ENCODE measurements at regions of chr15 and their contacts with region 1.

Region 1: GRCh38 chr15:62254137-62254934 is 89.3 kb upstream of the C2CD4B start:
- DNase-seq: peak; percentile 69
- H3K4me3 Mint-ChIP-seq: no peak overlapping the region
- H3K27ac Mint-ChIP-seq: no peak overlapping the region
- H3K4me1 Mint-ChIP-seq: no peaks in the 10 kb centered on the region
- H3K27me3 Mint-ChIP-seq: peaks cover 11% of the 10 kb centered on the region
- CTCF ChIP-seq: peak; percentile 70

Region 2: DNA sequence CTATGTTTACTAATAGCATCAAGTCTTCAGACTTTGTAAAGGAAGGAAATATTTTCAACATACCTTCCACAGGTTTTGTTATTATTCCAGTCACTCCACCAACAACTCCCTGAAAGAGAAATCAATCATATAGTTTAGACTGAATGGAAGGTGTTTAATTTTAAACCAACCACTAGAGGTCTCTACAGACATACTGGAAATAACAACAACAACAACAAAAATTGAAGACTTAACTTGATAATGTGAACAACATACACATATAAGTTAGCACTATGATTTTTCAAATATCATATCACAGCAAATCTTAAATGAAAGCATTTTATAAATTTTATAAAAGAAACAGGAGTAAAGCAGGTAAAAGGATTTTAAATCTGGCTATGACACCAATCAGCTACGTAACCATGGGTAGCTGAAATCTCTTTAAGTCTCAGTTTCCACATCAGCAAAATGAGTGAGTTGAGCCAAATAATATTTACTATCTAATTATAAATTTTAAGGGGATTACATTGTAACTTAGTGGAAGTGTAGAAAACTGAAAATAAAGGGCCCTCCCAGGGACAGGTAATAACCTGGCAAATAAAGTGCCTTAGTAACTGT is 382.3 kb before region 1 on chr15:
- CTCF ChIA-PET with region 1: no interaction called
- POLR2A ChIA-PET with region 1: no interaction called
- intact Hi-C with region 1: loop called (anchors 5 kb)
- DNase-seq: peak; percentile 38
- H3K4me3 Mint-ChIP-seq: no peak overlapping the region
- H3K27ac Mint-ChIP-seq: peak overlapping the region; percentile 31
- H3K4me1 Mint-ChIP-seq: no peaks in the 10 kb centered on the region
- H3K27me3 Mint-ChIP-seq: no peaks in the 10 kb centered on the region
- CTCF ChIP-seq: peak; percentile 54

Region 3: DNA sequence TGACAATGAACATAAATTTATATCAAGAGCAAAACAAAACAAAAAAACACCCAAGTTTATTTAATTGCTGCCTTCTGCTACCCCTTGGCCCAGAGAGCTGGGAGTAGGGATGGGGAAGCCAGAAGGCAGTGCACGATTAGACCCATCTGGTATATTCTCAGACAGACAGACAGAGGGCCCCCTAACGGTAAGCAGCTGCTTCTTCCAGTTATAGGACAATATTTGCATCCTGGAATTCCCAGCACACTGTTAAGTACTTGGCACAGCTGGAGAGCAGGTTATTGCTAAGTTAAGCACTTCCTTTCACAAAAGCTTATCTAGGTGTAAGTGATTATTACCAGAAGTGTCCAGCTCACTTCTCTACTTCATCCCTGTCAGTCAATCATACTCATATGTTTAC is 128.6 kb before region 1 on chr15:
- CTCF ChIA-PET with region 1: interaction called, 13 read pairs
- POLR2A ChIA-PET with region 1: no interaction called
- intact Hi-C with region 1: loop called (anchors 1 kb)
- DNase-seq: peak; percentile 60
- H3K4me3 Mint-ChIP-seq: no peak overlapping the region
- H3K27ac Mint-ChIP-seq: peak overlapping the region; percentile 84
- H3K4me1 Mint-ChIP-seq: peaks cover 18% of the 10 kb centered on the region
- H3K27me3 Mint-ChIP-seq: no peaks in the 10 kb centered on the region
- CTCF ChIP-seq: no peak

Region 4: DNA sequence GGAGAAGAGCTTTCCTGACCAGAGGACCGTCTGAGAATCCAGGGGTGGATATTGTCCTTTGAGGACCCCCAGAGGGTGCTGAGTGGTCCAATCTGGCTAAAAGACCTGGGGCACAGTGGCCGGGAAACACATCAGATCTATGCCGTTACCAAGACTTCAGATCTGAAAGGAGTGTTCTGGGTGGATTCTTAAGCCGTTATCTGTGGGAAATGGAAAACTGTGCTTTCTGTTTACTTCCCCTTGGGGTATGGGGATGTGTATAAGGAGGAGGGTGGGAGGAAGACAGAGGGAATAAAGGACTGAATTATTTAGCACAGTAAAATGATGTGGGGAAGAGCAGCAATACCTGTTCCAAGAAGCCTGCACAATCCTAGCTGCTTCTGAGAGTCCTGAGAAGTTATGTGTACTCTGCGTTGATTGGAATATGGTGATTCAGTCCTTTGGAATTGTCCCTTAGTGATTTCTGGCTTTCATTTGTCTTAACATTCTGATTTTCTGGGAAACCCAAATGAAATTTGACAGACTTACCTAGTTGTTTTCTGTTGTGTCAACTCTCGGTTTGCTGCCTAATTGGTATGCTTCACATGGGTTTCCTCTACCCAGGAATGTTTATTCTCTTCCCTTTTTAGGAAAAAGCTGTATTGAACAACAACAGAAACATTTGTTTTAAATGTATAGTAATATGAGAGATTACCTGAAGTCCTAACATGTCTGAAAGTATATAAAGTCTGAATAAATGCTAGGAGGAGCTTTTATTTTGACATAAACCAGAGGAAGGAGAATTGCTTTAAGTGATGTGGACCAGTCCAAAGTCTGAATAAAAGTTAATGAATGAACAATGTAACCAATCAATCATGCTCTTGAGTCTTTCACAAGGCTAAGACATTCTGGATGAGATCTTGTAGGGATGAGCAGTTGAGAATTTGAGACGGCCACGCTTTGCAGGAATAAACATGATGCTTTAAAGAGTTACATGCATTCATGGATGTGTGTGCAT is 337.8 kb after region 1 on chr15:
- CTCF ChIA-PET with region 1: no interaction called
- POLR2A ChIA-PET with region 1: no interaction called
- intact Hi-C with region 1: no loop called
- DNase-seq: no peak
- H3K4me3 Mint-ChIP-seq: no peak overlapping the region
- H3K27ac Mint-ChIP-seq: no peak overlapping the region
- H3K4me1 Mint-ChIP-seq: peaks cover 9% of the 10 kb centered on the region
- H3K27me3 Mint-ChIP-seq: no peaks in the 10 kb centered on the region
- CTCF ChIP-seq: no peak

Measured in MCF 10A (cell line).